Activated B cell treated with CpG ODN at 0.5 μM for 24 hours (primary cell): ENCODE measurements at regions of chr1 and their contacts with region 1.

Region 1: GRCh38 chr1:86913896-86914634 is at the start of gene SELENOF:
- DNase-seq: peak; percentile 92
- ATAC-seq: peak; percentile 89
- H3K4me3 Mint-ChIP-seq: no peak within 1 kb of the TSS
- H3K27ac Mint-ChIP-seq: no peak within 1 kb of the TSS
- H3K4me1 Mint-ChIP-seq: peaks cover 44% of the 10 kb centered on the region
- H3K27me3 Mint-ChIP-seq: no peaks in the 10 kb centered on the region
- CTCF ChIP-seq: no peak
- total RNA-seq, gene SELENOF: 172 TPM in 2 replicates

Region 2: DNA sequence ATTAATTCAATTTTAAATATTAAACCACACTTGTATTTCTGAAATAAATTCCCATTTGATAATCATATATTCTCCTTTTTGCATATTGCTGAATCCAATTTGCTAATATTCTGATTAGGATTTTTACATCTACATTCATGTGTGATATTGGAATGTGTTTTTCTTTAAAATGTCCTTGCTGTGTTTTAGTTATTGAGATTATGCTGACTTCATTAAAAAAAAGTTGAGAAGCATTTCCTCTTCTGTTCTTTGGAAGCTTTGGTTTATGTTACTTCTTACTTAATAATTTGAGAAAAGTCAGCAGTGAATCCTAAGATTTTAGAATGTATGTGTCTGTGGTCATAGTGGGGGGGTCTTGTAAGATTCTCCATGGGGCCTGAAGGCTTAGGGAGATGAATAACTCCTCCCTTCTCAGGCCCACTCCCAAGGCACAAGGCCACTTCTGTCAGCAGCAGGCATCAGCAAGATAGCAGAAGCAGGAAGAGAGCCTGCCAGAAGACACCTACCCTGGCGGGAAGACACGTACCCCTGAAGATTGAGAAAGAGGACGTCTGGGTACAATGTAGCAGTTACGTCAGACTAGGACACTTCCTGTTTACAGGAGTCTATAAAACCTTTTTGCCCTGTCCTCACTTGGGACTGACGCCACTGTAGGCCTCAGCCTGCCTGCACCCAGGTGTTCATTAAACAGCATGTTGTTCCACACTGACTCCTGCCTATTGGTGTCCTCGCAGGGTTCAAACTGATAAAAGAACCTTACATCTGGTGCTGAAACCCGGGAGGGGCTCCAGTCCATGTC is 574.9 kb before region 1 on chr1:
- CTCF ChIA-PET with region 1: no interaction called
- POLR2A ChIA-PET with region 1: no interaction called
- intact Hi-C with region 1: no loop called
- DNase-seq: no peak
- ATAC-seq: no peak
- H3K4me3 Mint-ChIP-seq: no peak overlapping the region
- H3K27ac Mint-ChIP-seq: no peak overlapping the region
- H3K4me1 Mint-ChIP-seq: no peaks in the 10 kb centered on the region
- H3K27me3 Mint-ChIP-seq: no peaks in the 10 kb centered on the region
- CTCF ChIP-seq: no peak

Region 3: DNA sequence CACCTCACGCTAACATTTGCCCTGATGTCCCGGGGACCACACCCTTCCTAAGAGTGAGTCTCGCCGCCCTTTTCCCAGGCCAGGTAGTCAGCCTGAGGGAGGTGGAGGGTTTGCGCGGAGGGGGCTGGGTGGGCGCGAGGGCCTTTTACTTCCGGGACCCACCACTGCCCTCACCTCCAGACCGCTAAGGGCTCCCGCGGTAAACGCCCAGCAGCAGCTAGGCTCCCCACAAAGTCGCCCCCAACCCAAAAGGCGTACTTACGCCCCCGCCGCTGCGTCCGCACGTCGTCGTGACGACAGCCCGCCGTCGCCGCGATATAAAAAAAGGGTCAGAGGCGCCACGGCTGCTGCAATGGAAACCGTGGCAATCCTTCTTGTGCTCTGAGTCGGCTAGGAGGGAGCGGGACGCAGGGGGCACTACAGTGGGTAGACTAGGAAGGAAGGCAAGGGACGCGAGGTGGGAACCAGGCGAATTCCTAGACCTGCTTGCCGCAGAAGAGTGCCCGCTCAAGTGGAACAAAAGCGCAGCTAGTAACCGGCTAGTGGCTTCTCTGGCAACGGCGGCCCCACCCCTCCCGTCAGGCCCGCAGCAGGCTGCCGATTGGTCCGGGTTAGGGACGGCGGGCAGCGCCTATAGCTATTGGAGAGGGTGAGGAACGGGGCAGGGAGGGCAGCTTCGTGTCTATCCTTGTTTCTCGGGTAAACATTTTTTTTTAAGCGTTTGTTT is 518.1 kb before region 1 on chr1 and contains the start of gene ODF2L:
- CTCF ChIA-PET with region 1: no interaction called
- POLR2A ChIA-PET with region 1: interaction called, 6 read pairs
- intact Hi-C with region 1: loop called (anchors 1 kb)
- DNase-seq: peak; percentile 78
- ATAC-seq: peak; percentile 99
- H3K4me3 Mint-ChIP-seq: peak within 1 kb of the TSS; percentile 98
- H3K27ac Mint-ChIP-seq: peak within 1 kb of the TSS; percentile 95
- H3K4me1 Mint-ChIP-seq: peaks cover 45% of the 10 kb centered on the region
- H3K27me3 Mint-ChIP-seq: no peaks in the 10 kb centered on the region
- CTCF ChIP-seq: no peak
- total RNA-seq, gene ODF2L: 28.2 and 36.1 TPM in 2 replicates

Region 4: DNA sequence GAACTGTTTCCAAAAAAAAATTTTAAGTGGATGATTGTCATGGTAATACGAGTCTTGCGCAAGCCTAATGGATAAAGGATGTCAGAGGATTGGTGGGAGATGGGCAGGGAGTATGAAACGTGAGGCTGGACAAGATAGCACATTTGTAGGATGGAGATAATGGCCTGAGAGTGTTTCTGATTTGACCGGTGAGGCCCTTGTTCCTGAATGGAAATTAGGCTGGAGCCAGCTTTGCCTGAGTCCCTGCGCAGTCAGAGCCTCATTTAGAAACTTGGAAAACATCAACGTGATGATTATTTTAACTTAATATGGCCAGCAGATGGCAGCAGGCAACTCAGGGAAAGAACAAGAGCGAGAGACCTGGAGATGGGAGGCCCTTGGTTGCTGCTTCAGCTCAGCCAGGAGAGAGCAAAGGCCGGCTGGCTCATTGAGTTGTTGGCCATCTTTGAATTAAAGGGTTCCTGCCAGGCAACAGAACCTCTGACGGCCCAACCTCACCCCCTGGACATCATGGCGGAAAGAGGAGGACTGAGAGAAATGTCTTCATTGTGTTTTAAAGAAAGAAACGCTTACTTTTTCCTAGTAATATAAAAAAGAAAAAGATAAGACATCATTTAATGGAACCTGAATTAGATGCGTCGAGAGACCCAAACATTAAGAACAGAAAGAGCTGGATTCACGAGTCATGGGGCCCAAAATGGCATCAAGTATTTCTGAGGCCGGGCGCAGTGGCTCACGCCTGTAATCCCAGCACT is 80.4 kb before region 1 on chr1:
- CTCF ChIA-PET with region 1: interaction called, 10 read pairs
- POLR2A ChIA-PET with region 1: no interaction called
- intact Hi-C with region 1: loop called (anchors 1 kb)
- DNase-seq: peak; percentile 22
- ATAC-seq: peak; percentile 88
- H3K4me3 Mint-ChIP-seq: no peak overlapping the region
- H3K27ac Mint-ChIP-seq: peak overlapping the region; percentile 67
- H3K4me1 Mint-ChIP-seq: peaks cover 4% of the 10 kb centered on the region
- H3K27me3 Mint-ChIP-seq: no peaks in the 10 kb centered on the region
- CTCF ChIP-seq: no peak

Region 5: GRCh38 chr1:86887479-86888162 is 26.4 kb before region 1 on chr1:
- CTCF ChIA-PET with region 1: interaction called, 3 read pairs
- POLR2A ChIA-PET with region 1: interaction called, 4 read pairs
- intact Hi-C with region 1: loop called (anchors 2 kb)
- DNase-seq: no peak
- ATAC-seq: no peak
- H3K4me3 Mint-ChIP-seq: no peak overlapping the region
- H3K27ac Mint-ChIP-seq: peak overlapping the region; percentile 35
- H3K4me1 Mint-ChIP-seq: peaks cover 36% of the 10 kb centered on the region
- H3K27me3 Mint-ChIP-seq: no peaks in the 10 kb centered on the region
- CTCF ChIP-seq: no peak

Region 6: GRCh38 chr1:86965012-86965826 is 51.2 kb after region 1 on chr1:
- CTCF ChIA-PET with region 1: interaction called, 4 read pairs
- POLR2A ChIA-PET with region 1: interaction called, 8 read pairs
- intact Hi-C with region 1: loop called (anchors 2 kb)
- DNase-seq: no peak
- ATAC-seq: peak; percentile 34
- H3K4me3 Mint-ChIP-seq: no peak overlapping the region
- H3K27ac Mint-ChIP-seq: peak overlapping the region; percentile 14
- H3K4me1 Mint-ChIP-seq: peaks cover 12% of the 10 kb centered on the region
- H3K27me3 Mint-ChIP-seq: no peaks in the 10 kb centered on the region
- CTCF ChIP-seq: no peak

Region 7: DNA sequence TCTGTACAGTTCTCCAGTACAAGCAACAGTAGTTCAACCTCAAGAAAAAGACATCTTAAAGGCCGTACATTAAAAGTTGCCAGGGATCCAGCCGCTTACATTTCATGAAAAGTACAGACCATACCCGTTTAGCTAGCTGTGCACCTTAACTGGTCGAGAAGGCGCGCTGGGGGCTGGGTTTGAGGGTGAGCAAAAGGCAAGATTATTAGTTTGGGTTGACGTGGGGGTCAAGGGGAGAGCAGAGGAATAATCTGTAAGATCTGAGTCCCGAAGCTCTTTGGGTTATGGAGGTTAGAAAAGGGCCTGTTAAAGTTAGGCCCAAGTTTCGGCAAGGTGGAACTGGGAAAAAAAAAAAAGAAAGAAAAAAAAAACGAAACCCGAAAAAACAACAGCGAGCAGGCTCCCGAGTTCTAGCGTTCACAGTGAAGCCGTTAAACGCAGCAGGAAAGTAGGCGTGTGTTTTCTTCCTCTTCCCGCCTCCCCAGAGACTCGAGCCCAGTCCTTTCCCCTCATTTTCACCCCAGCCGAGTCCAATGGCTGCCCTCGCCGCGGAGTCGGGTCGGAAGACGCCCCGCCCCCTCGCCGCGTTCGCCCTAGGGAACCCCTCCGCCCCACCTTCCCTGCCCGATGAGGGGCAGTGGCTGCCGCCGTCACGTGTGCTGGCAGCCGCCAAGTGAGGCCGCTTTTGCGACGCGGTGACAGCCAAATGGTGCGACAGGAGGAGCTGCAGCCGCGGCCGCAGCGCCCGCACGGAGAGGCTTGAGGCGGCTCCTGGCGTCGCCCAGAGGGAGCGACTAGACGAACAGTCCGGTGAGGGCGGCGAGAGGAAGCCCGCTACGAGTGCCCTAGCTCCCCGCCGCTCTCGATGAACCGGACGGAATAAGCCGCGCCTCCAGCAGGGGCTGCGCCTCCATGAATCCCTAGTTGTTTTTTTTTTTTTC is 1769.7 kb after region 1 on chr1 and contains the start of gene PKN2:
- CTCF ChIA-PET with region 1: no interaction called
- POLR2A ChIA-PET with region 1: interaction called, 10 read pairs
- intact Hi-C with region 1: loop called (anchors 1 kb)
- DNase-seq: peak; percentile 94
- ATAC-seq: peak; percentile 91
- H3K4me3 Mint-ChIP-seq: peak within 1 kb of the TSS; percentile 95
- H3K27ac Mint-ChIP-seq: peak within 1 kb of the TSS; percentile 97
- H3K4me1 Mint-ChIP-seq: peaks cover 28% of the 10 kb centered on the region
- H3K27me3 Mint-ChIP-seq: no peaks in the 10 kb centered on the region
- CTCF ChIP-seq: no peak
- total RNA-seq, gene PKN2: 29.4 and 42.7 TPM in 2 replicates